ENCODE measurements at regions of chr1 and their contacts with region 1.

Region 1: DNA sequence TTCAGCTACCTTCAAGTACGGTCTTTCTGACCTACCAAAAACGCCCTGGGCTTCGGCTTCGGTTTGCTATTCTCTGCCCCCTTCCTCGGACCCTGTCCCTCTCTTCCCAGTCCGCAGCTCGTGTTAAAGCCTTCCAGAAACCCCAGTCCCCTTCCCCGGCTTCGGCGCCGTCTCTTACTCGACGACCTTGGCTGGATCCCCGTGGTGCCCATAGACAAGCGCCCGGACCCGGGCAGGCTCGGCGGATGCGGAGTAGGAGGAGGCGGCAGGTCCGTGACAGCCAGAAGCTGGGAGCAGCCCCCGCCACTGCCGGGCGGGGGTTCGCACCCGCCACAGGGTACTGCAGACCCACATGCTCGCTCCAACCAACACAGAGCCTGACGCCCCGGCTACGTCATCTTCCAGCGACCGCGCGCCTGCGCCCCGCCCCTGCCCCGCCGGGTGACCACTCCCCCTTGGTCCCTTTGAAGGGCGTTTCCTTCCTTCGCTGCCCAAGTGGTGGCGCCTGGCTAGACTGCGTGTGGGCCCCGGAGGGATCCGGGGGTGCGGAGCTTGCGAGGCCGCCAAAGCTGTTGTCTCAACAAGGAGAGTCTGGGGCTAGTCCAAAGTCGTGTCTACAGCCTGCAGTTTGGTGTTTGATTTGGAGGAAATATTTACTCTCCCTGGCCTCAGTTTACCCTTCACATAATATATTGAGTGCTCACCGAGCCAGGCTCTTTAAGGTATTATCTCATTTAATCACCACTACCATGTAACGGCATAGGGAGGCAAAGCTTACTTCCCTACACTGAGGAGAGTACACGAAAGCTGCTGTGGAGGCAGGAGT is at the start of gene MECR:
- DNase-seq: peak; percentile 86 to 92
- ATAC-seq: peak; percentile 96 to 98
- H3K4me3 ChIP-seq: peak within 1 kb of the TSS; percentile 71 to 87 (median 82)
- H3K27ac ChIP-seq: peak within 1 kb of the TSS; percentile 82 to 90 (median 86)
- H3K4me1 ChIP-seq: peaks cover 11 to 14% of the 10 kb centered on the region in 2 donors
- H3K27me3 ChIP-seq: no peaks in the 10 kb centered on the region
- CTCF ChIP-seq: peak in 2 of 5 experiments; percentile 16 to 22
- POLR2A ChIP-seq: peak; percentile 69 to 71
- total RNA-seq, gene MECR: 21.9 to 29.8 (median 26.6) TPM

Region 2: DNA sequence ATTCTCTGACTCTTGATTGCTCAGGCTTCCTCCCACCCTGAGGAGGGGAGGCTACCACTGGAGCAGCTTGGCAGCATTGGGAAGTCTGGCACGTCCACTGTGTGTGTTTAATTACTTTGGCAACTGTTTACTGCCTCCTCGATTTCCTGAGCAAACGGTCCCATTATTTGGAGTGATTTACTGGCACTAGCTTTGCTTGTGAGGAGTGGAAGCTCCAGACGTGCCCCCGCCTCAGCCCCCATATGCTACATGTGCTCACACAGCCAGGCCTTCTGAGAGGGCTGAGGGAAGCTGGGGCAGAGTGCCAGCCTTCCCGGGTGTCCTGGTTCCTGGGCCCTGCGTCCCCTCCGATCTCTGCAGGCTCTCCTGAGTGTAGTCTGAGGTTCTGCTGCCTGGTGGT is 311.8 kb after region 1 on chr1:
- in situ Hi-C with region 1: no loop called
- intact Hi-C with region 1: no loop called
- DNase-seq: no peak
- ATAC-seq: no peak
- H3K4me3 ChIP-seq: no peak overlapping the region
- H3K27ac ChIP-seq: no peak overlapping the region
- H3K4me1 ChIP-seq: no peaks in the 10 kb centered on the region
- H3K27me3 ChIP-seq: peaks cover 0 to 2% (median 0%) of the 10 kb centered on the region in 3 donors
- CTCF ChIP-seq: no peak
- POLR2A ChIP-seq: no peak

Region 3: DNA sequence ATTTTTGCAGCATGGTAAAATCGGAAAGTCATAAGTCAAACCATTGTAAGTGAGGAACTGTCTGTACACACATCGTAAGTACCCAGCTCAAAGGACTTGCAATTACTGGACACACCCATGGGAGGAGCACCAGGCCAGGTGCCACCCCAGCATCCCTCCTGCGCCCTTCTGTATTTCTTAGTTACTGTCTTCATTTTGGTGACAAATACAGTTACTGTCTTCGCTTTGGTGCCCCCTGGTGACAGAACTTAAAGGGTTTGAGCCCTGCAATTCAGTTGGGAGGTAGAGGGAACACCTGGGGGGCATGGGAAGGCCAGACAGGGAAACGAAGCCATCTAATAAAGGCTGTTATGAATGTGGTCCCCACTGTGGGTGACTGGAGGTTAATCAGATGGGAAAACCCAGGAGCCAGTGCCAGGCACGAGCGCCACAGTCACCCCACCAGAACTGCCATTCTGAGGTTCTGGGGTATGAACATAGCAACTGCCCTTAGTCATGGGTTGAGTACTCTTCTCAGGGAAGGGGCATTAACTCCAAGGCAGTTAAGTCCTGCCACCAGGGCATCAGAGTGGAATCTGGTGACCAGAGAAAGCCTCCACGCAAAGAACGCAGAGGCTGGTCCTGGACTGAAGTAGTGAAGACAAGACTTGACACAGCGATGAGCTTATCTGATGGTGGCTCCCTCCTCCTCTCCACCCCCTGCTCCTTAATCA is 618.4 kb after region 1 on chr1:
- in situ Hi-C with region 1: no loop called
- intact Hi-C with region 1: loop called (anchors 10 kb)
- DNase-seq: no peak
- ATAC-seq: no peak
- H3K4me3 ChIP-seq: no peak overlapping the region
- H3K27ac ChIP-seq: no peak overlapping the region
- H3K4me1 ChIP-seq: no peaks in the 10 kb centered on the region
- H3K27me3 ChIP-seq: peaks cover 0 to 28% (median 8%) of the 10 kb centered on the region in 3 donors
- CTCF ChIP-seq: peak in 1 of 5 experiments; percentile 24
- POLR2A ChIP-seq: no peak

Region 4: DNA sequence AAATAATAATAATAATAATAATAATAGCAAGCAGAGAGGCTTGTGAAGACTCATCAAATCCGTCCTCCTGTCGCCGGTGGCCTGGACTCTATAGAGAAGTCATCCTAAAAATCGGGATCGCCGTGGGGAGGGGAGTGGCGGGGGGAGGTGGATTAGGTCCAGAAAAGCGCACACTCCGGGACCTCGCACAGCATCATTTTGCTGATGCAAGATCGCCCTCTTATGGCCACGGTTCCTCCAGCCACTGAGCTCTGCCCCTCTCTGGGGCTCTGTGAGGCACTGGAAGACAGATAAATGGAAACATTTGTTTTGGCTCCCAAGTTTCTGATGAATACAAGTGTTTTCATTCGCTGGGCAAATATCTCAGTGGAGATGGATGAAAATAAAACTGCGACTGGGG is 880.7 kb after region 1 on chr1:
- in situ Hi-C with region 1: no loop called
- intact Hi-C with region 1: loop called (anchors 10 kb)
- DNase-seq: no peak
- ATAC-seq: no peak
- H3K4me3 ChIP-seq: no peak overlapping the region
- H3K27ac ChIP-seq: no peak overlapping the region
- H3K4me1 ChIP-seq: no peaks in the 10 kb centered on the region
- H3K27me3 ChIP-seq: peaks cover 17 to 30% (median 18%) of the 10 kb centered on the region in 3 donors
- CTCF ChIP-seq: peak in 2 of 5 experiments; percentile 27 to 28
- POLR2A ChIP-seq: no peak

Region 5: GRCh38 chr1:30379684-30380624 is 1149.2 kb after region 1 on chr1:
- in situ Hi-C with region 1: loop called in 2 of 4 experiments (anchors 10 to 25 kb)
- intact Hi-C with region 1: no loop called
- DNase-seq: peak; percentile 18 to 31
- ATAC-seq: peak; percentile 76 to 79
- H3K4me3 ChIP-seq: no peak overlapping the region
- H3K27ac ChIP-seq: no peak overlapping the region
- H3K4me1 ChIP-seq: peaks cover 4 to 6% of the 10 kb centered on the region in 2 donors
- H3K27me3 ChIP-seq: no peaks in the 10 kb centered on the region
- CTCF ChIP-seq: peak; percentile 63 to 86 (median 77)
- POLR2A ChIP-seq: no peak

Region 6: GRCh38 chr1:30713311-30713710 is 1482.5 kb after region 1 on chr1:
- in situ Hi-C with region 1: loop called in 2 of 4 experiments (anchors 5 to 10 kb)
- intact Hi-C with region 1: no loop called
- DNase-seq: no peak
- ATAC-seq: no peak
- H3K4me3 ChIP-seq: no peak overlapping the region
- H3K27ac ChIP-seq: no peak overlapping the region
- H3K4me1 ChIP-seq: peaks cover 0 to 3% of the 10 kb centered on the region in 2 donors
- H3K27me3 ChIP-seq: no peaks in the 10 kb centered on the region
- CTCF ChIP-seq: no peak
- POLR2A ChIP-seq: no peak

Region 7: GRCh38 chr1:30779294-30780071 is 1548.7 kb after region 1 on chr1:
- in situ Hi-C with region 1: no loop called
- intact Hi-C with region 1: loop called (anchors 5 kb)
- DNase-seq: peak; percentile 37 to 76
- ATAC-seq: peak; percentile 63 to 64
- H3K4me3 ChIP-seq: no peak overlapping the region
- H3K27ac ChIP-seq: no peak overlapping the region
- H3K4me1 ChIP-seq: peaks cover 5 to 14% of the 10 kb centered on the region in 2 donors
- H3K27me3 ChIP-seq: no peaks in the 10 kb centered on the region
- CTCF ChIP-seq: peak; percentile 94 to 97 (median 96)
- POLR2A ChIP-seq: no peak

Measured in gastrocnemius medialis (tissue), 4 donors.